Aorta (tissue), 5 donors: ENCODE measurements at regions of chr10 and their contacts with region 1.

Region 1: GRCh38 chr10:100382553-100382952 is 35.5 kb downstream of the SCD start:
- DNase-seq: no peak
- ATAC-seq: no peak
- H3K4me3 ChIP-seq: no peak overlapping the region
- H3K27ac ChIP-seq: no peak overlapping the region
- H3K4me1 ChIP-seq: no peaks in the 10 kb centered on the region
- H3K27me3 ChIP-seq: no peaks in the 10 kb centered on the region

Region 2: GRCh38 chr10:99758211-99758891 is 624.2 kb before region 1 on chr10:
- intact Hi-C with region 1: no loop called
- DNase-seq: no peak
- ATAC-seq: no peak
- H3K4me3 ChIP-seq: no peak overlapping the region
- H3K27ac ChIP-seq: no peak overlapping the region
- H3K4me1 ChIP-seq: no peaks in the 10 kb centered on the region
- H3K27me3 ChIP-seq: no peaks in the 10 kb centered on the region

Region 3: DNA sequence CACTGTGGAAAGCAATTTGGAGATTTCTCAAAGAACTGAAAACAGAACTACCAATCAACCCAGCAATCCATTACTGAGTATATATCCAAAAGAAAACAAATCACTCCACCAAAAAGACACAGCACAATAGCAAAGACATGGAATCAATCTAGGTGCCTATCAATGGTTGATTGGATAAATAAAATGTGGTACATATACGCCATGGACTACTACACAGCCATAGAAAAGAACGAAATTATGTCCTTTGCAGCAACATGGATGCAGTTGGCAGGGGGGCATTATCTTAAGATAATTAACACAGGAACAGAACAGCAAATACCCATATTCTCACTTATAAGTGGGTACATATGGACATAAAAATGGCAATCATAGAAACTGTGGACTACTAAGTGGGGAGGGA is 44.8 kb after region 1 on chr10:
- intact Hi-C with region 1: loop called in 1 of 2 experiments (anchors 5 kb)
- DNase-seq: no peak
- ATAC-seq: no peak
- H3K4me3 ChIP-seq: no peak overlapping the region
- H3K27ac ChIP-seq: no peak overlapping the region
- H3K4me1 ChIP-seq: no peaks in the 10 kb centered on the region
- H3K27me3 ChIP-seq: no peaks in the 10 kb centered on the region